ENCODE measurements at regions of chr17 and their contacts with region 1.

Region 1: GRCh38 chr17:65455972-65456343 is 105.5 kb downstream of the AXIN2 start:
- DNase-seq: peak; percentile 50
- H3K4me3 Mint-ChIP-seq: no peak overlapping the region
- H3K27ac Mint-ChIP-seq: no peak overlapping the region
- H3K4me1 Mint-ChIP-seq: peaks cover 3% of the 10 kb centered on the region
- H3K27me3 Mint-ChIP-seq: no peaks in the 10 kb centered on the region

Region 2: GRCh38 chr17:65238614-65239013 is 217.3 kb before region 1 on chr17:
- CTCF ChIA-PET with region 1: no interaction called
- intact Hi-C with region 1: no loop called
- DNase-seq: no peak
- H3K4me3 Mint-ChIP-seq: no peak overlapping the region
- H3K27ac Mint-ChIP-seq: no peak overlapping the region
- H3K4me1 Mint-ChIP-seq: no peaks in the 10 kb centered on the region
- H3K27me3 Mint-ChIP-seq: no peaks in the 10 kb centered on the region

Region 3: GRCh38 chr17:65644545-65644944 is 188.6 kb after region 1 on chr17:
- CTCF ChIA-PET with region 1: no interaction called
- intact Hi-C with region 1: loop called (anchors 10 kb)
- DNase-seq: no peak
- H3K4me3 Mint-ChIP-seq: no peak overlapping the region
- H3K27ac Mint-ChIP-seq: no peak overlapping the region
- H3K4me1 Mint-ChIP-seq: no peaks in the 10 kb centered on the region
- H3K27me3 Mint-ChIP-seq: no peaks in the 10 kb centered on the region

Region 4: DNA sequence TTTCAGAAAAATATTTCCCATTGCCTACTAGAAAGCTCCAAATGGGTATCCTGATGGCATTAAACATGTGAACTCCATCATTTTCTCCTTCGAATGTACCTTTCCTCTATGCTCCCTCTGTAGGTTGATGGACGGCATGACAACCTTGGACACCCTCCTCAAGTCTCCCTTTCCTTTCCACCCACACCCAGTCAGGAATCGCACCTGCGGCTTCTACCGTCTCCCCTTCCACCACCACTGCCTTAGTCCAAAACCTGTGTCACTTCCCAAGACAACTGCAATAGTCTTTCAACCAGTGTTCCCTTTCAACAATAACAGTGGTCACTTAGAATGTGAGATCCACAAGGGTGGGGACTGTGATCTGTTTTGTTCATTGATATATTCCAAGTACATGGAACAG is 338.6 kb after region 1 on chr17:
- CTCF ChIA-PET with region 1: no interaction called
- intact Hi-C with region 1: loop called (anchors 1 kb)
- DNase-seq: no peak
- H3K4me3 Mint-ChIP-seq: no peak overlapping the region
- H3K27ac Mint-ChIP-seq: no peak overlapping the region
- H3K4me1 Mint-ChIP-seq: peaks cover 12% of the 10 kb centered on the region
- H3K27me3 Mint-ChIP-seq: peaks cover 2% of the 10 kb centered on the region

Region 5: GRCh38 chr17:65988081-65988850 is 532.3 kb after region 1 on chr17:
- CTCF ChIA-PET with region 1: no interaction called
- intact Hi-C with region 1: loop called (anchors 5 kb)
- DNase-seq: peak; percentile 20
- H3K4me3 Mint-ChIP-seq: no peak overlapping the region
- H3K27ac Mint-ChIP-seq: no peak overlapping the region
- H3K4me1 Mint-ChIP-seq: no peaks in the 10 kb centered on the region
- H3K27me3 Mint-ChIP-seq: peaks cover 2% of the 10 kb centered on the region

Region 6: GRCh38 chr17:66165513-66166123 is 709.7 kb after region 1 on chr17:
- CTCF ChIA-PET with region 1: no interaction called
- intact Hi-C with region 1: loop called (anchors 2 kb)
- DNase-seq: no peak
- H3K4me3 Mint-ChIP-seq: no peak overlapping the region
- H3K27ac Mint-ChIP-seq: no peak overlapping the region
- H3K4me1 Mint-ChIP-seq: peaks cover 4% of the 10 kb centered on the region
- H3K27me3 Mint-ChIP-seq: no peaks in the 10 kb centered on the region

Measured in activated naive CD4-positive, alpha-beta T cell treated with anti-CD3 and anti-CD28 coated beads for 36 hours (primary cell).